ENCODE measurements at regions of chr12 and their contacts with region 1.

Region 1: GRCh38 chr12:48924617-48925303 is 532 bp downstream of the FKBP11 start:
- DNase-seq: peak; percentile 69
- ATAC-seq: peak; percentile 83
- H3K4me3 Mint-ChIP-seq: peak overlapping the region; percentile 97
- H3K27ac Mint-ChIP-seq: peak overlapping the region; percentile 94
- H3K4me1 Mint-ChIP-seq: peaks cover 27% of the 10 kb centered on the region
- H3K27me3 Mint-ChIP-seq: no peaks in the 10 kb centered on the region
- CTCF ChIP-seq: peak; percentile 42

Region 2: DNA sequence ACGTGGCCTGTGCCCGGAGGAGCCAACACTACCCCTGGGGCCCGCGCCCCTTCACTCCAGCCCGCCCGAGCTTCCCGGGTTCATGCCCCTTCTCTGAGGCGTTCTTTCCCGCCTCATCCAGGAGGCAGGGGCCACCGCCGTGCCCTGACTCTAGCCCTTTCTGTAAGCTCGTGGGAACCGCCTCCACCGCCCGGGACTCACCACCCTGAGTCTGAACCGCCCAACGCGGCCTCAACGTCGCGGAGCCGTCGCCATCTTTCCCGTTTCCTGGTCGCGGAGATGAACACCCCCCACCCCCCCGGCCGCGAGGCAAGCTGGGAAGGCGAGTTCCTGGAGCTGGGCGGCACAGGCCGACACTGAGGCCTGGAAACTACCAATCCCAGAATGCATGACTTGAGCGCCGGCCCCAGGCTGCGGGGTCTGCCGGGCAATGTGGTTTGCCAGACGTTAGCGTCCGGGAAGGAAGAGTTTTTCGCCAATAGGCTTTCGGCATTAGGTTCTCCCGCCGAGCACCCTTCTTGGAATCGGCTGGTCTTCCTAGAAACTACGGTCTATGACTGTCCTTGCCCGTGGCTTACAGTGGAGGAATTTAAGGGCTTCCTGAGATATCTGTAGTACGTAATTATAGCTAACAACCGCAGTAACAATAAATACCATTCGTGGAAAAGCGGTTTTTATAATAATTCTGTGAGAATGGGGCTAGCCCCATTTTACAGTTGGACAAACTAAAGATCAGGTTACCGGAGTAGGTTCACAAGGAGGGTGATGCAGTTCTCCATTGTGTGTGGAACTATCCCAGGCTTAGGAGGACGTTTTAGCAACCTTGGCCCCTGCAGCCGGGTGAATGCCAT is 72.7 kb before region 1 on chr12 and contains the start of gene DDX23:
- CTCF ChIA-PET with region 1: interaction called, 21 read pairs
- POLR2A ChIA-PET with region 1: interaction called, 13 read pairs
- intact Hi-C with region 1: loop called (anchors 1 kb)
- DNase-seq: peak; percentile 75
- ATAC-seq: peak; percentile 98
- H3K4me3 Mint-ChIP-seq: peak within 1 kb of the TSS; percentile 98
- H3K27ac Mint-ChIP-seq: peak within 1 kb of the TSS; percentile 93
- H3K4me1 Mint-ChIP-seq: peaks cover 36% of the 10 kb centered on the region
- H3K27me3 Mint-ChIP-seq: no peaks in the 10 kb centered on the region
- CTCF ChIP-seq: no peak
- total RNA-seq, gene DDX23: 116 and 118 TPM in 2 replicates

Region 3: DNA sequence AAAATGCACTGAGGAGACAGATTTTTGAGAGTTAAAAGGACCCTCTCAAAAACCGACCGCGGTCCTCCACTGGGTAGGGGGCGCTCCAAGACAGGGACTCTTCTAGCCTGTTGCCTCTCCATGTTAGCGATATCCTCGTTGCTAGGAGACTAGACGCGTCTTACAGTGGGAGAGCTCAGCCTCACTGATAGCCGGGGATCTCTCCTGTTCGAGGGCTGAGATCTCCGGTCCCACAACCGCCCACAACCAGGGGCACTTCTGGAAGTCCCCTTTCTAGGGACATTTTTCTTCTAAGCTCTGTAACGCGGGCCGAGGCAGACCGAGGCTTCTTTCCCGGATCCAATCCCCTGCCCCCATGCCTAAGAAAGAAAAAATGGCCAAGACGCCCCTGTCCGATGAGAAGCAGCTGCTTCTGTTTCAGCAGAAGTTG is 20.8 kb before region 1 on chr12:
- CTCF ChIA-PET with region 1: interaction called, 5 read pairs
- POLR2A ChIA-PET with region 1: interaction called, 6 read pairs
- intact Hi-C with region 1: loop called (anchors 2 kb)
- DNase-seq: peak; percentile 53
- ATAC-seq: peak; percentile 97
- H3K4me3 Mint-ChIP-seq: peak overlapping the region; percentile 77
- H3K27ac Mint-ChIP-seq: no peak overlapping the region
- H3K4me1 Mint-ChIP-seq: peaks cover 10% of the 10 kb centered on the region
- H3K27me3 Mint-ChIP-seq: peaks cover 18% of the 10 kb centered on the region
- CTCF ChIP-seq: no peak

Region 4: DNA sequence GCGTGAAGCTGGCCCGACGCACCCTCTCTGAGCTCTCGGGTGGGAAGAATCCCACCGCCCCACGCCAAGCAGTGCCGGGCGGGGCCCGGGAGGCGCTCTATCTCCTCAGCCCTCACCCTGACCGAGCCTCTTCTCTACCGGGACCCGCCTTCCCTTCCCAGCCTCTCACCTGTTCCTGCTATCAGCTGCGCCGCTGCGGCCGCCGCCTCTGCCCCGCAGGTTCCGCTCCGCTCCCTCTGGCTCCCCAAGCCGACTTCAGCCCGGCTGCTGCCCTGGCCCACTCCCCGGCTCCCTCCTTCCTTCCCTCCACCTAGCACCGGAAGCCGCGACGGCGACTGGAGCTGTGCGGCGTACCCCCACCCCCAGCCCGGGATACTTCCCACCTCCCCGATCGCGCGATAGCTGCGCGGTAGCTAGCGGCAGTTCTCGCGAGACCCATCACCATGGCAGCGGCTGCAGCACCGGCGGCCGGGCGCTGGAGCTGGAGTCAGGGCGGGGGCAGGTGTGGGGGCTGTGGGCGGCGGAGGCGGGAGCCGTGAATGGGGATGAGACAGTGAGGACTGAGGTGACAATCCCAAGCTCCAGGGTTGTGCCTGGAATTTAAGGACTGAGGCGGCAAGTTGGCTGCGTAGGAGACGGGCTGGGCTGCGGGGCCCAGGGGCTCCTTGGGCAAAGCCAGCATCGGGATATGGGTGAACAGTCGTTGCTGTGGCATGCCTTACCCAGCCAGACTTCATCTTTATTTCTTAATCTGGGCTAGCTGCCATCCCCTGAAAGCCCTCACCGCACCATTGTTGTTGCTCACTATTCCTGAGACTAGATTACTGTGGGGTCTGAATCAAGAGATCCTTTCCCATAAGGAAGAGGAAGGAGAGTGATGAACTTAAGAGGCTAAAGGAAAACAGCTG is 32.6 kb after region 1 on chr12 and contains the start of gene ARF3:
- CTCF ChIA-PET with region 1: interaction called, 8 read pairs
- POLR2A ChIA-PET with region 1: interaction called, 14 read pairs
- intact Hi-C with region 1: loop called (anchors 1 kb)
- DNase-seq: peak; percentile 88
- ATAC-seq: peak; percentile 95
- H3K4me3 Mint-ChIP-seq: peak within 1 kb of the TSS; percentile 99
- H3K27ac Mint-ChIP-seq: peak within 1 kb of the TSS; percentile 91
- H3K4me1 Mint-ChIP-seq: peaks cover 41% of the 10 kb centered on the region
- H3K27me3 Mint-ChIP-seq: peaks cover 8% of the 10 kb centered on the region
- CTCF ChIP-seq: no peak
- total RNA-seq, gene ARF3: 113 and 119 TPM in 2 replicates

Region 5: GRCh38 chr12:48988030-48988649 is 63.4 kb after region 1 on chr12:
- CTCF ChIA-PET with region 1: interaction called, 17 read pairs
- POLR2A ChIA-PET with region 1: interaction called, 3 read pairs
- intact Hi-C with region 1: loop called (anchors 1 kb)
- DNase-seq: peak; percentile 58
- ATAC-seq: peak; percentile 90
- H3K4me3 Mint-ChIP-seq: no peak overlapping the region
- H3K27ac Mint-ChIP-seq: no peak overlapping the region
- H3K4me1 Mint-ChIP-seq: no peaks in the 10 kb centered on the region
- H3K27me3 Mint-ChIP-seq: peaks cover 34% of the 10 kb centered on the region
- CTCF ChIP-seq: peak; percentile 31

Region 6: GRCh38 chr12:49018261-49019119 is 93.7 kb after region 1 on chr12 and contains the start of gene PRKAG1:
- CTCF ChIA-PET with region 1: interaction called, 5 read pairs
- POLR2A ChIA-PET with region 1: interaction called, 4 read pairs
- intact Hi-C with region 1: loop called (anchors 1 kb)
- DNase-seq: peak; percentile 97
- ATAC-seq: peak; percentile 86
- H3K4me3 Mint-ChIP-seq: peak within 1 kb of the TSS; percentile 93
- H3K27ac Mint-ChIP-seq: peak within 1 kb of the TSS; percentile 98
- H3K4me1 Mint-ChIP-seq: peaks cover 31% of the 10 kb centered on the region
- H3K27me3 Mint-ChIP-seq: no peaks in the 10 kb centered on the region
- CTCF ChIP-seq: no peak
- total RNA-seq, gene PRKAG1: 55.3 and 70.5 TPM in 2 replicates

Region 7: GRCh38 chr12:49232940-49233841 is 308.4 kb after region 1 on chr12:
- CTCF ChIA-PET with region 1: no interaction called
- POLR2A ChIA-PET with region 1: no interaction called
- intact Hi-C with region 1: loop called (anchors 10 kb)
- DNase-seq: no peak
- ATAC-seq: no peak
- H3K4me3 Mint-ChIP-seq: peak overlapping the region; percentile 93
- H3K27ac Mint-ChIP-seq: peak overlapping the region; percentile 89
- H3K4me1 Mint-ChIP-seq: peaks cover 15% of the 10 kb centered on the region
- H3K27me3 Mint-ChIP-seq: no peaks in the 10 kb centered on the region
- CTCF ChIP-seq: no peak

Measured in activated B cell treated with CpG ODN at 0.5 μM for 24 hours (primary cell).